SK-N-SH (cell line): ENCODE measurements at regions of chr5 and their contacts with region 1.

Region 1: DNA sequence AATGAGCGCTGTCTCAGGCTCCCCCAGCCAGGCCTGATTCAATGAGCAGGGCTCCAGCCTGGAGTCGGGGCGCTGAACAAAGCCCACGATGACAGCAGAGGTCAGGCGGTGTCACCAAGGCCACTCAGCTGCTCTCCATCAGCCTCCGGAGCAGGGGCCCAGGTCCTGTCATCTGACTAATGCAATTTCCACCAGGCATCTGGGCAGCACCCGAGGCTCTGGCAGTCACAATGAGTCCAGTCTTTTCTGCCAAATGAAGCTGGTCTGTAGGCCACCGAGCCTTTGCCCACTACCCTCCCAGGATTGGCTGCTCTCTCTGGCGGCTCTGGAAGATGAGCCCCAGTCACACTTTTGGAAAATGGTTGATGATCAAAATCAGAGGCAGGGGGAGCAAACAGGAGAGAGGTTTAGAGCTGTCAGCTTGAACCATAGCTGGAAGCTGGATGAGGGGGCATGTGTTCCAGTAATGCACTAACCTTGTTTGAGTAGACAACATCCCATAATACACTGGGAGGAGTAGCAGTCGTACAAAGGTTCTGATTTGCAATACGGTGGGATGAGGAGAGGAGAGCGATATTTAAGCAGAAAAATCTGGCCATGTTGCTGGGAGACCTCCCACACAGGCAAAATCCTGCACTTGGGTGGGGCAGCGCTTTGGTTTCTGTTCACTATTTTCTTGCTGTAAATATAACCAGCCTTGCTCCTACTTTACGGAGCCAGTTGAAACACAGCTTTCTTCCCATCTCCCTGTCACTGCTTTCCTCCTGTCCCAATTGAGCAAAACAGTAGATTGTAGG is 306.4 kb upstream of the PANK3 start:
- DNase-seq: peak; percentile 67
- H3K4me3 ChIP-seq: no peak overlapping the region
- H3K27ac ChIP-seq: peak overlapping the region; percentile 49 to 100; a peak in 3 of 4 replicates
- H3K4me1 ChIP-seq: peaks cover 13 to 68% of the 10 kb centered on the region in 2 experiments
- H3K27me3 ChIP-seq: no peaks in the 10 kb centered on the region
- CTCF ChIP-seq: no peak
- EP300 ChIP-seq: peak in 1 of 2 experiments; percentile 99; a peak in 3 of 4 replicates
- RAD21 ChIP-seq: peak; percentile 40

Region 2: DNA sequence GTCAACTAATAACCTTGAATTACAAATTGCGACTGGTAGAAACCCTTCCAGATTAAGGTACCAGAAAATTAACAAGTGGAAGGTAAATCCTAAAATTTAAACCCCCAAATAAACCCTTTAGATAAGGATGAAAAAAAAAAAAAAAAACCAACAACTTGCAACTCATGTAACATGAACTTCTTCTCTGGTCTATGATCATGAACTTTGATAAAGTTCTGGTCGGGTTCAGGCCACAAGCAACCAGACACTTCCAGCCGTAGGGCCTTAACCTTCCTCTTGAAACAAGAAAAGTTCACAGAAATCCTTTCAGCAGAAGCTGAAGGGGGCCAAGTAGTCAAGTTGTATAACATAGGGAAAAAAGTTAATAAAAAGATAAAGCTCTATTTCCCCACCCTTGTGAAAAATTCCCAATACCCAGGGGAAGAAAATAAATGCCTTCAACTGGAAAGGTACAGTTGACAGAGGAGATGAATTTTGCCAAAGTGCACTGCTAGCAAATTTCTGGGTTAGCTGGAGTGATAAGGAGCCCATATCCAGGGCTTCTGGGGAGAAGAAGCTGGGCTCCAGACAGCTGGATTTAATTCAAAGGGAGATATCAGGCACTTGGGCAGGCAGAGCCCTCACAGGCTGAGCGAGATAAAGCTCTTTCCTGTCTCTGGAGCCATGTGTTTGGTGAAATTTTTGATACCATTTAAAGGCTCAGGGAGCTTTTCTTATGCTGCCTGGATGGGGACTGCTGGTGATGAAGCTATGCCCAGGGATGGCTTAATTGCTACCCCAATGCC is 72.1 kb before region 1 on chr5:
- CTCF ChIA-PET with region 1: no interaction called
- POLR2A ChIA-PET with region 1: interaction called, 13 read pairs
- DNase-seq: peak; percentile 73
- H3K4me3 ChIP-seq: no peak overlapping the region
- H3K27ac ChIP-seq: peak overlapping the region; percentile 19 to 99; a peak in 3 of 4 replicates
- H3K4me1 ChIP-seq: peaks cover 0 to 80% of the 10 kb centered on the region in 2 experiments; a peak in 2 of 4 replicates
- H3K27me3 ChIP-seq: no peaks in the 10 kb centered on the region
- CTCF ChIP-seq: no peak
- EP300 ChIP-seq: peak; percentile 43 to 99; a peak in 3 of 4 replicates
- RAD21 ChIP-seq: peak; percentile 17

Region 3: DNA sequence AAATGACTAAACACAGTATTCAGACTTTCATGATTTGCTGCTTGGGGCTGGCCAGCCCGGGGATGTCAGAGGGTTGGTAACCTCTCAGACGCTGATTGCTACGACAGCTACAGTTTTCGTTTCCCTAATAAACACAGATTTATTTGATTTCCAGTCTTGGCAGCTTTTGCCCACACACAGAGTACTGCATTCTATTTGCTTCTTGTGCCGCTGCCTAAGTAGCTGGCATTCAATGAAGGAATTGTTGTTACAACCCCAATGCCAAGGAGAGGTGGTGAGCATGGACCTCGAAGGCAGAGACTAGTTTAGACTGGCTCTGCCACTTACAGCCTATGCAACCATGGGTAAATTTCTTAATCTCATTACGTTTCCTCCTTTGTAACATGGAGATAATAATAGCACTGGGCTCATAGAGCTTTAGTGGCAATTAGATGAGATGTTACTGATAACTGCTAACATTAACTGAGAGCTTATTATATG is 59.2 kb before region 1 on chr5:
- CTCF ChIA-PET with region 1: interaction called, 6 read pairs
- POLR2A ChIA-PET with region 1: interaction called, 25 read pairs
- DNase-seq: peak; percentile 41
- H3K4me3 ChIP-seq: no peak overlapping the region
- H3K27ac ChIP-seq: peak overlapping the region in 1 of 2 experiments; percentile 87; a peak in 2 of 4 replicates
- H3K4me1 ChIP-seq: peaks cover 0 to 95% of the 10 kb centered on the region in 2 experiments; a peak in 3 of 4 replicates
- H3K27me3 ChIP-seq: no peaks in the 10 kb centered on the region
- CTCF ChIP-seq: no peak
- EP300 ChIP-seq: peak in 1 of 2 experiments; percentile 81; a peak in 2 of 4 replicates
- RAD21 ChIP-seq: peak; percentile 24

Region 4: DNA sequence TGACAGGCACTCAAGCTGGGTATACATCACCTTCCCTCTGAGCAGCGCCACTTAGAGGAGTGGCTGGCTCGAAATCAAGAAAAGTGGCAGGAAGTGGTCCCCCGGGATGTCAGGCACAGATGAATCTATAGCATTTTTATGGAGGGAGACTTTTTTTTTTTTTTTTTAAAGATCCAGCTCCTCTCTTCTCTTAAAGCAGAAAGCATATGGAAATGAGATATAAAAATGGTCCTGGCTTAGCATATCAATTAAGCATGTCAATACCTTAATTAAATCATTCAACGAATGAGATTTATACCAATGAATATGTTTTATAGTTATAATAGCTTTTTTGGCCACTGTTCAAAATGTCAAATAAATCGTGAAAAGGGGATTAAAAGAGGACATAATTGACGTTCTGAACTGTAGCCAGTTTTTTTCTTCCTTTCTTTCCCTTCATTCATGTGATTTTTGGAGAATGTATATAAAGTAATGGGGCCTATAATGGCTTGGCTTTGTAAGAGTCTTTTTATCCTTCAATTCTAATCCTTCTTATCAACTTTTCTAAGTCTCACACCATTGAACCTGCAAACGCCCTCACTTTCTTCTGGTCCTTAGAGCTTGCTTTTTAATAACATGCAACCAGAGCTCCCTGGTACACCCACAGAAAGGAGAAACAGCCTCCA is 12.9 kb after region 1 on chr5:
- CTCF ChIA-PET with region 1: interaction called, 9 read pairs
- POLR2A ChIA-PET with region 1: interaction called, 16 read pairs
- DNase-seq: peak; percentile 53
- H3K4me3 ChIP-seq: no peak overlapping the region
- H3K27ac ChIP-seq: peak overlapping the region in 1 of 2 experiments; percentile 93; a peak in 2 of 4 replicates
- H3K4me1 ChIP-seq: peaks cover 0 to 65% of the 10 kb centered on the region in 2 experiments; a peak in 2 of 4 replicates
- H3K27me3 ChIP-seq: no peaks in the 10 kb centered on the region
- CTCF ChIP-seq: no peak
- EP300 ChIP-seq: peak in 1 of 2 experiments; percentile 42; a peak in 1 of 4 replicates
- RAD21 ChIP-seq: no peak